Posterior cingulate gyrus (tissue), 11 donors: ENCODE measurements at regions of chr13 and their contacts with region 1.

Region 1: GRCh38 chr13:92074658-92075057 is 676.2 kb downstream of the GPC5 start:
- DNase-seq: peak in 2 of 10 donors; percentile 23 to 55

Region 2: DNA sequence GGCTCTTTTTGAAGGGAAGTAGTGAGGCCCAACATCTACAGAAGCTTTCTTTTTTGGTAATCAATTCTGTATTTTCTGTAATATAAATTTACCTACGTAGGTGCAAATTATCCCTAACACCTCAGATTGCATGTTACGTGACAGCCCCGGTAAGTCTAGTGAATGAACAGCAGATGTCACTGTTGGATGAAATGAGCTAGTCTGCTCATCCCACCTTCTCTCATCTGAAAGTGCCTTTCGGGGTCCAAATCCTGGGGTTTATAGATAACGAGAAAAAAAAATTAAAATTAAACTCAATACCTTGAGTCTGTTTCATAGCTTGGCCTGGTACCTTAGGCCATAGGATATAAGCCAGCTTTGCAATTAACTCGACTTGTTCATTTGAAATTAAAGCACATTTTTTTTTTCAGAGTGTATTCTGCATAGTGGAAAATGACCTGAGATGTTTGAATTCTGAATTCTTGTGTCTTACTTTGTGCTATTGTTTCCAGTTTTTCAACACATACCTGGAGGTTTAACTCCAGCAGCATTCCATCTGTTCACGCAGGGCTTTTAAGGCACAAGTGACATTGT is 128.1 kb before region 1 on chr13:
- intact Hi-C with region 1: loop called (anchors 10 kb)
- DNase-seq: peak in 2 of 10 donors; percentile 4 to 12

Region 3: GRCh38 chr13:92164822-92165221 is 90.2 kb after region 1 on chr13:
- intact Hi-C with region 1: no loop called
- DNase-seq: peak in 1 of 10 donors; percentile 49

Region 4: DNA sequence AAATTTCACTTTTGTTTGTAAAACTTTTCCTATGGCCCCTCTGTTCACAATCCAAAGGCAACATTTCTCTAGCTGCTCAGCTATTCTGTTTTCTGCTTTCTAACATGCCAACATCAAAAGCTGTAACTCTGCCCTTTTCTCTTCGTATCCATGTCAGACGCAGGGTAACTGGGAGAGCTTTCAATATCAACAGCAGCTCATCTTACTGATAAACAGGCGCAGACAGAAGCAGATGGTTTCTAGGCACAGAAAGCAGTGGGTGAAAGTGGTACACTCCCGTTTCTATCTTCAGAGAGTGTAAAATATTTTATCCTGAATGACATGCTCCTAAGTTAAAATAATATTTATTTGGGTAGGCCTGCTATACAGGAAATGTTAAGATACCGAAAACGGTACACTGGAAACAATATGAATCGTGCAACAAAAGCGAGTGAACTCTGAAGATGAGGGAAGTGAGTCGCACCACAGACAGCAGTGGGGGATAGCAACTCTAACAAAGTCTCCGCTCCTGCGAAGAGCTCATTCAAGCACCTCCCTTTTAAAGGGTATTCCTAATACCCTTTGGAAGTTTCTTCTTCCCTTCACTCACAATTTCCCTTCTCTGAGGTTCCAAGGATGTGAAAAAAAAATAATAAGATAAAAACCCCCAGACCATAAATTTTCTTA is 122.1 kb after region 1 on chr13:
- intact Hi-C with region 1: no loop called
- DNase-seq: no peak